ENCODE measurements at regions of chr18 and their contacts with region 1.

Region 1: DNA sequence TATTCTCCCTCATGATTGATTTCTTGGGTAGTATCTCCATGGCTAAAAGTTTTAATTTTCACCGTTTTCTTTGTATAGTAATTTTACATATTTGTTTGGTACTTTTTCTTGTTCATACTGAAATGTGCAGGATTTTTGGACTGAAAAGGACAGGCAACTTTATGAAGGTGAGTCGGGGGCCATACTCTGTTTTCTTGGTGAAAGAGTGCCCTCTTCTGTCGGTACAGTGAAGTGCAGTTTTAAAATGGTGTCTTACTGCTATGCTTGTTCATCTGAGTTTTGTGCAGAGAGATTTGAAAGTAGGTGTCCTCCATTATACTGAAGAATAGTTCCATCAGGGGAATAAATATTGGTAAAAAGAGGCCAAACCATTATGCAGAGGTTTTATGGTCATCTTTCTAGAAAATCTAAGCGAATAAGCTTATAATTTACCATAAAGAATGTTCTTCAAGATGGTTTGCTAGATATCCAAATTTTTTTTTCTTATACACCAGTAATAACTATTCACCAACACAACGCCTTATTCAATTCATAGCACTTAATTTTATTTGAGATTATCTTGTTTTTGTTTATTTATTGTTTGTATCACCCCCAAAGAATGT is 8.7 kb upstream of the SERPINB13 start:
- DNase-seq: no peak
- ATAC-seq: no peak
- H3K4me3 ChIP-seq: no peak overlapping the region
- H3K27ac ChIP-seq: no peak overlapping the region
- H3K4me1 ChIP-seq: no peaks in the 10 kb centered on the region
- H3K27me3 ChIP-seq: no peaks in the 10 kb centered on the region
- CTCF ChIP-seq: peak; percentile 47 to 72 (median 60)
- POLR2A ChIP-seq: no peak

Region 2: GRCh38 chr18:63523660-63524059 is 54.8 kb before region 1 on chr18:
- intact Hi-C with region 1: loop called (anchors 1 to 5 kb)
- DNase-seq: no peak
- ATAC-seq: no peak
- H3K4me3 ChIP-seq: no peak overlapping the region
- H3K27ac ChIP-seq: no peak overlapping the region
- H3K4me1 ChIP-seq: no peaks in the 10 kb centered on the region
- H3K27me3 ChIP-seq: peaks cover 0 to 12% (median 0%) of the 10 kb centered on the region in 9 donors
- CTCF ChIP-seq: no peak
- POLR2A ChIP-seq: no peak

Measured in heart left ventricle (tissue), 16 donors.